ENCODE measurements at regions of chrX and their contacts with region 1.

Region 1: GRCh38 chrX:43750248-43750676 is 94.2 kb downstream of the MAOA start:
- DNase-seq: peak; percentile 19
- ATAC-seq: peak; percentile 62
- H3K4me3 ChIP-seq: no peak overlapping the region
- H3K27ac ChIP-seq: no peak overlapping the region
- H3K4me1 ChIP-seq: no peaks in the 10 kb centered on the region
- H3K27me3 ChIP-seq: no peaks in the 10 kb centered on the region; the same call in 1 of the 2 replicates
- CTCF ChIP-seq: peak; percentile 49
- POLR2A ChIP-seq: no peak
- RAD21 ChIP-seq: peak; percentile 54

Region 2: DNA sequence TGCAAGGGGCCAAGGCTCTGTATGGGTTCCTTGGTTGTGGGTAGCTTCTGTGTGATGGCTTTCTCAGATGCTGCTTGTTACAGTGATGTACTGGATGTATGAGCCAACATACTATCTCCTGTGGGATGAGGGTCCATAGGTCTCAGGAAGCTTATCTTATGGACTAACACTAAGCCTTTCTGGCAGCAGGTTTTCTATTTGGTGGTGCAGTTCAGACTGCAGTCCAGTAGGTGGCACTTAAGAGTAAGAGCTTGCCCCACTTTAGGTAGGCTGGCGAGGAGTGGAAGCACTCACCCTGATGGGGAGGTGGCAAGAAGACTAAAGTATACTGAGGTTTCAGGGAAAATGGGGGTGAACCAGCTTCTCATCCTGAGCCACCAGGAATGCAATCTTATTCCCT is 400.9 kb before region 1 on chrX:
- CTCF ChIA-PET with region 1: no interaction called
- POLR2A ChIA-PET with region 1: no interaction called
- dilution Hi-C with region 1: no loop called
- in situ Hi-C with region 1: no loop called
- intact Hi-C with region 1: loop called (anchors 2 kb)
- DNase-seq: peak; percentile 19
- ATAC-seq: peak; percentile 62
- H3K4me3 ChIP-seq: no peak overlapping the region
- H3K27ac ChIP-seq: no peak overlapping the region
- H3K4me1 ChIP-seq: no peaks in the 10 kb centered on the region
- H3K27me3 ChIP-seq: 0 out of 2 replicates have a peak, but pooled peaks cover 2% of the 10 kb centered on the region
- CTCF ChIP-seq: peak; percentile 41
- POLR2A ChIP-seq: no peak
- RAD21 ChIP-seq: 0 out of 2 replicates have a peak, but pooled peaks have one; percentile 19

Region 3: GRCh38 chrX:43654431-43655150 is 95.7 kb before region 1 on chrX:
- CTCF ChIA-PET with region 1: no interaction called
- POLR2A ChIA-PET with region 1: no interaction called
- dilution Hi-C with region 1: no loop called
- in situ Hi-C with region 1: no loop called
- intact Hi-C with region 1: loop called (anchors 2 kb)
- DNase-seq: peak; percentile 77
- ATAC-seq: peak; percentile 97
- H3K4me3 ChIP-seq: peak overlapping the region; percentile 59
- H3K27ac ChIP-seq: peak overlapping the region; percentile 98
- H3K4me1 ChIP-seq: no peaks in the 10 kb centered on the region
- H3K27me3 ChIP-seq: peaks cover 2% of the 10 kb centered on the region
- CTCF ChIP-seq: 0 out of 2 replicates have a peak, but pooled peaks have one; percentile 1
- POLR2A ChIP-seq: no peak
- RAD21 ChIP-seq: no peak

Region 4: DNA sequence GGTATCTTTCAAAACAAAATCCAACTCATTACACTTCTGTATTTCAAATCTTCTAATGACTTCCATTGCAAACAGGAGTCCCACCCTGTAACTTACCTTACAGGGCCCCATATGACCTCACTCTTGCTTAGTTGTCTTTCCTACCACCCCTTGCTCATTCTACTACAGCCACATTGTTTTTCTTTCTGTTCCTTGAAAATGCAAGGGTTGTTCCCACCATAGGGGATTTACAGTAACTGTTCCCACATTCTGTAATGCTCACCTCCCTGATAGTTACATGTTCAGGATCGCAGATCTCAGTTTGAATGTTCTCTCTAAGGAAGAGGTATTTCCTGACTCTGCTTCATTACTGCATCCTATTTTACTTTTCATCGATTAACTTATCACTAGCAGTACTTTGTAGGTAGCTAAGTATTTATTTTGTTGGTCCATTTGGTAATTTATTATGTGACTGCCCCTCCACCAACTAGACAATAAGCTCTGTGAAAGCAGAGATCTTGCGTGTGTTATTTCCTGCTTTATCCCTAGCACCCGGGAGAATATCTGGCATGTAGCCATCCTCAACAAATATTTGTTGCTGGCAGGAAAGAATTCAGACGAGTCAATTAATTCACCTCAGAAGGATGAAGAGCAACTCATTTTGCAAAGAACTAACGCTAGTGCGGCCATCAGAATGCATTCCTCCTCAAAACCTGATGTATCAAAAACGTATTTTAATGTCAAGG is 110.5 kb after region 1 on chrX:
- CTCF ChIA-PET with region 1: no interaction called
- POLR2A ChIA-PET with region 1: no interaction called
- dilution Hi-C with region 1: no loop called
- in situ Hi-C with region 1: no loop called
- intact Hi-C with region 1: no loop called
- DNase-seq: peak; percentile 1
- ATAC-seq: no peak
- H3K4me3 ChIP-seq: no peak overlapping the region
- H3K27ac ChIP-seq: no peak overlapping the region
- H3K4me1 ChIP-seq: no peaks in the 10 kb centered on the region
- H3K27me3 ChIP-seq: peaks cover 1% of the 10 kb centered on the region; the same call in 1 of the 2 replicates
- CTCF ChIP-seq: no peak
- POLR2A ChIP-seq: no peak
- RAD21 ChIP-seq: no peak

Region 5: DNA sequence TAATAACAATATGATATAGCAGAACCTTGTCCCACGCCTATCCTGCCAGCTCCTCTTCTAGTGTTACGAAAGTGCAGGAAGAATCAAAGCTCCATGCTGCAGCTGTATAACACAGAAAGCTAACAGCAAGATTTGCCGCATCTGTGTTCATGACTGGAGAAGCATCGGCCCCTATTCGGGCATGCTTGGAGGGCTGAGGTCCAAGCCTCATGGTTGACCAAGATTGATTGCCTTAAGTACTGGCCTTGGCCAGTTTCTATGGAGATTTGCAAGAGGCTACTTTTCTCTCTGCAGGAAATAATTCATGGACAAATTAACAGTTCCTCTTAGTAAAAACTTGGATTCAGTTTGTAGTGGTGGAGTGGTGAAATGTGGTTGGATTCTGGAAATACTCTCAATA is 235.8 kb after region 1 on chrX:
- CTCF ChIA-PET with region 1: no interaction called
- POLR2A ChIA-PET with region 1: no interaction called
- dilution Hi-C with region 1: no loop called
- in situ Hi-C with region 1: no loop called
- intact Hi-C with region 1: no loop called
- DNase-seq: no peak
- ATAC-seq: no peak
- H3K4me3 ChIP-seq: no peak overlapping the region
- H3K27ac ChIP-seq: no peak overlapping the region
- H3K4me1 ChIP-seq: no peaks in the 10 kb centered on the region
- H3K27me3 ChIP-seq: no peaks in the 10 kb centered on the region; the same call in 1 of the 2 replicates
- CTCF ChIP-seq: no peak
- POLR2A ChIP-seq: no peak
- RAD21 ChIP-seq: no peak

Measured in IMR-90 (cell line).